Dorsolateral prefrontal cortex (tissue), 120 donors: ENCODE measurements at regions of chr12 and their contacts with region 1.

Region 1: DNA sequence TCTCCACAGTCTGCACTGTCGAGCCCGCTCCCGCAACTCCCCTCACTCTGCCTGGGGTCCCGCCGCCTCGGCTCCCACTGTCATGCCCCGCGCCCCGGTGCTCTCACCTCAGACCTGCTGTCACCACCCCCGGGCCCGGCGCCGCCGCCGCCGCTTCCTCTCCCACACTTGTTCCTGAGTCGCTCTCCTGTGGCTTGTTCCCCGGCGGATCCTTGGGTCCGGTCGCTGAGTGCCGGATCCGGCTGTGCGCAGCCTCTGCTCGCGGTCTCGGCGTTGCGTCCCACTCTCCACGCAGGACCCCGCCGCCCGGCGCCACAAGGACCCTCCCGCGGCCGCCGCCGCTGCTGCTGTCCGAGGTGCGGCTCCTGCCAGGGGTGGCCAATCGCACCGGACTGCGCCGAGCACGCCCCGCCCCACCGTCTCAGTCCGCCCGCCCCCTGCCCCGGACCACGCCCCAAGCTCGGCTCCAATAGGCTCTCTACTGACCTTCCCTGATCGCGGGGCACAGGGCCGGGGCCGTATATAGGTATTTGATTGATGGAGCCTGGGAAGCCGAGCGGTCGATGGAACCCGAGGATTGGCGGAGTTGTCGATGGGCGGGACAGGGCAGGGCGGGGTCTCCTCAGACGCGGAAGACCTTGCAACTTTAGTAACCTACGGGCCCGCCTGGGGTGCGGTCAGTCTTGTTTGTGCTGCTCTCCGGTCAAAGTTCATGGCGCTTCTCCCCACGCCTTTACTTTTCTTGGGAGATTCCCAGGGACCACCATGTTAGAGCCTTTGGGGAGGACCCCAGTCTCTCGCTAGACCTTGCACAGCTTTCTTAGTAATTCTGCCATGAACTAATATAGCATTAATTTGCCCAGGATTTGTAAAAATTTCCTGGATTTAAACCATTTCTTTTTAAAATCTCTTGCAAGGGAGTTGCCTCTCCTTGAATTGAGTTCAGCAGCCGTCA is at the start of gene TAOK3:
- DNase-seq: peak; percentile 94 to 99 (median 98)
- H3K4me3 ChIP-seq: peak within 1 kb of the TSS; percentile 69 to 100 (median 94)
- H3K27ac ChIP-seq: peak within 1 kb of the TSS in 58 of 59 donors; percentile 32 to 99 (median 88)
- H3K27me3 ChIP-seq: no peaks in the 10 kb centered on the region
- CTCF ChIP-seq: peak in 36 of 56 donors; percentile 7 to 55 (median 24)
- total RNA-seq, gene TAOK3: 47.3 to 103 (median 73.3) TPM

Region 2: DNA sequence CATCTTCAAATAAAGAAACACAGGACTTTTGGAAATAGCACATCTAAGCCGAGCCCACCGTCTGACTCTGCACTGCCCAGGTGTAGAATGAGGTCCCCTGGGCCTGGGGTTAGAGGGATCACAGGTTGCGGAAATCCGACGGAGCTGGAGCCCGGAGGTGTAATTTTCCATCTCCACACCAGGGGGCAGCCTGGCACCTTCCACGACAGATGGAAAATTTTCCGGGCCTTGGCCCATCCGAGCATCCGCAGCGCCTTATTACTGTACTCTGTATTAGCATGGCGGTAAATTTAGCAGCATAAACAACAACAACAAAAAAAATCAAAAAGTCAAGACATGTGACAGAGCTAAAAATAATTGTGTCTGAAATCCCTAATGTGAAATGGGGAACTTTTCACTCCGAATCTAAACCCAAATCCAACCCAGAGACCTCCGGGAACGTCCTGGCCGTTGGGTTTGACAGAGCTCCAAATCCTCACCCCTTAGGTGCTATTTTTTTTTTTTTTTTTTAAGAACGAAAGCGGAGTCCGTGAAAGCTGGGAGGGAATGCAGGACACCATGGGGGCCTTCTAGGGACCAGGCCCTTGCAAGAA is 497.9 kb before region 1 on chr12:
- intact Hi-C with region 1: loop called (anchors 10 kb)
- DNase-seq: peak; percentile 65 to 86 (median 76)
- H3K4me3 ChIP-seq: peak overlapping the region in 41 of 59 donors; percentile 7 to 54 (median 27)
- H3K27ac ChIP-seq: peak overlapping the region in 52 of 59 donors; percentile 6 to 89 (median 74)
- H3K27me3 ChIP-seq: peaks cover 0 to 5% (median 0%) of the 10 kb centered on the region in 45 donors
- CTCF ChIP-seq: peak; percentile 77 to 96 (median 91)

Region 3: DNA sequence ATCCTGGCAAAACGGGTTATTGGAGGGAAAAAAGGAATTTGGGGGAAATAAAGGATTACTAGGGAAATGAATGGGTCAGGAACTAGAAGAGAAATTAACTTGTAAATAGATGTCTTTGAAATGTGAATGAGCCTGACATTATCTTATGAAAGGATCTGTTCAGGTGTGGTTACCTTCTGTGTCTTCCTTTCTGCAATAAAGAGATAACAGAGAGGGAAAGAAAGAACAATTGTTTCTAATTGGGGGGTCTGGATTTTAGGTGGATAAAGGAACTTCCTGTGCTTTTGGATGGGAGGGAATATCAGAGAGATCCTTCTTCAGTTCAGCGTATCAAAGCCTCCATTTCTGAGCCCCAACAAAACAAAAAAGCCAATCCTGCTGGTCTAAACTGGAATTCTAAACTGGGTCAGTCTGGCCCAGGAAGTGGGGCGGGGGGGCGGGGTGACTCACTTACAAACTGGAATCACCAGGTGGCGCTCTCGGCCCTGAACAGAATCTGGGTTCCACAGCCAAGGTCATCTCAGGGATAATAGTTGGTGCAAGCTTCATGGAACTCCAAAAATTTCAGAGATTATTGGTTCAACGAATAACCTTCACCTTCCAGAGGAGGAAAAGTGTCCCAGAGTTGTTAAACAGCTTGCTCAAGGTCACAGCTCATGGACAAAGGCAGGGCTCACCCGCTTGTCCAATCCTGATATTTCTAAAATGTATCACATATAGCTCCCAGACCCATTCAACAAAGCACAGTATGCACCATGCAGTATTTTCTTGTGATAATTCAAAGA is 252.0 kb before region 1 on chr12:
- intact Hi-C with region 1: loop called (anchors 2 to 5 kb)
- DNase-seq: peak; percentile 53 to 82 (median 66)
- H3K4me3 ChIP-seq: peak overlapping the region in 1 of 59 donors; percentile 9
- H3K27ac ChIP-seq: peak overlapping the region in 52 of 59 donors; percentile 1 to 89 (median 66)
- H3K27me3 ChIP-seq: no peaks in the 10 kb centered on the region
- CTCF ChIP-seq: peak; percentile 61 to 94 (median 82)

Region 4: DNA sequence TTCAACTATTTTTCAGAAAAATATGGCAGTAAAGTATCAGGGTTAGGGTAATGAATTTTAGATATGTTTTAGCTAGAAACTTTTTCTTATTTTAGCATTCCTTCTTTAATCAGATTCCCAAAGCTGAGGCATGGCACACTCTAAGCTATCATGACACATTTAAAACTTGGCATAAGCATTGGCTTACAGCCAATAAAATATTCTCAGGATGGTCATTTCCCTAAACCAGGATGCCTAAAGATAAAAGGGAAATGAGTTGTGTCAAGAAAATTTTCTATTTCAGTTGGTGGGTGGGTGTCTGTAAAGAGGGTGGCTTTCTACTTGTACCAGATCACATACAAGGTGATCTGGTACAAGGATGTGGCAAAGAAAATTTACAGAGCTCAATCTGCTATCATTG is 189.1 kb before region 1 on chr12:
- intact Hi-C with region 1: loop called (anchors 1 to 2 kb)
- DNase-seq: no peak
- H3K4me3 ChIP-seq: no peak overlapping the region
- H3K27ac ChIP-seq: peak overlapping the region in 34 of 59 donors; percentile 17 to 76 (median 50)
- H3K27me3 ChIP-seq: no peaks in the 10 kb centered on the region
- CTCF ChIP-seq: no peak

Region 5: DNA sequence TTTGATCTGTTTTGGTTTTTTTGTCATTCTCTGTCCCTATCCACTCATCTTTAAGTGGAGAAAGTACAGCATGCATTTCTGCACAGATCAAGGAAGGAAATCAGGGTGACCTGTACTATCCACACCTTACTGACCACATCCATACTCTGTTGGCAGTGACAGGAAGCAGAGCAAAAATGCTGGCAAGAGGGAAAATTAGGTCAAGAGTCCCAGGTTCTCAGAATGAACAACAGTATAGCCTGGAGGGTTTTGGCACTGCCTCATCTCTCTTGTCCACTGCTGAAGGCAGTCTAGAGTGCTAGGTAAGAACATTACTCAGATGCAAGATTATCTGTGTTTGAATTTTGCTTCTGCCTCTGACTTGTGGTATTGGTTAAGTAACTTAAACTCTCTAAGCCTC is 70.8 kb before region 1 on chr12:
- intact Hi-C with region 1: loop called (anchors 2 to 5 kb)
- DNase-seq: no peak
- H3K4me3 ChIP-seq: no peak overlapping the region
- H3K27ac ChIP-seq: no peak overlapping the region
- H3K27me3 ChIP-seq: no peaks in the 10 kb centered on the region
- CTCF ChIP-seq: no peak